Activated B cell treated with CpG ODN at 0.5 μM for 24 hours (primary cell): ENCODE measurements at regions of chr5 and their contacts with region 1.

Region 1: DNA sequence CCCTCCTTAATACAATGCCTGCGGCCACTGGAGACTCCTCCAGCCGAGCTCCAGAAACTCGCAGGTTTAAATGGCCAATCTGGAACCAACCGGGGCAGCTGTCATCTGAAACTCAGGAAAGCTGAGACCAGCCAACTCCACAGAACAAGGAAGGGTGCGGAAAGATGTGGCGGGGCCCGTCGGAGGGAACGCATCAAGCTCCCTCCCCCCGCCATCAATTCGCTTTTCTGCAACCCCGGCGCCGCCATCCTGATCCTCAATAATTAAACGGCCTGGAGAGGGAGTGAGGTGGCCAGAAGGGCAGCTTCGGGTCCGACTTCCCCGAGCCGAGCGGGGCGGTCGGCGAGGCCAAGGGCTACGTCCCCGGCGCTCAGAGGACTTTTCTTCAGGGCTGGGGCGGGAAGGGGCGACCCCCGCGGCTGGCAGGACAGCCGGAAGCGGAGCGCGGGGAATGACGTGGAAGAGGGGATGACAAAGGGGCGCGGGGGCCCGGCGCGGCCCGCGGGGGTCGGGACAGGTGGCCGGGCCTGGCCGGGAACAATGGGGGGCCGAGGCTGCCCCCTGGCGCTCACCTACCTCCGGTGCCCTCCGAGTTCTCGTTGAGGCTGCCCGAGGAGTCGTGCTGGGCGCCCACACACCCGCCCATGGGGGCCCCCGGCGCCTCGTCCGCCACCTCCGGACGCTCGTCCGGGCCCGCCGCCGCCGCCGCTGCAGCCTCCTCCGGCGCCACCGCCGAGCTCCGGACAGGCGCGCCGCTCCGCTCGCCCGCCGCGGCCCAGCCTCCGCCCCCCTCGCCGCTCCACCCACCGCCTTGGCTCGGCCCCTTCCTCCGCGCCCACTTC is at the start of gene UBTD2:
- DNase-seq: peak; percentile 90
- ATAC-seq: peak; percentile 88
- H3K4me3 Mint-ChIP-seq: peak within 1 kb of the TSS; percentile 90
- H3K27ac Mint-ChIP-seq: peak within 1 kb of the TSS; percentile 68
- H3K4me1 Mint-ChIP-seq: peaks cover 23% of the 10 kb centered on the region
- H3K27me3 Mint-ChIP-seq: no peaks in the 10 kb centered on the region
- CTCF ChIP-seq: peak; percentile 50
- total RNA-seq, gene UBTD2: 8.5 and 9.0 TPM in 2 replicates

Region 2: GRCh38 chr5:172106511-172107356 is 176.5 kb before region 1 on chr5:
- CTCF ChIA-PET with region 1: interaction called, 9 read pairs
- POLR2A ChIA-PET with region 1: interaction called, 9 read pairs
- intact Hi-C with region 1: loop called (anchors 1 kb)
- DNase-seq: peak; percentile 71
- ATAC-seq: no peak
- H3K4me3 Mint-ChIP-seq: no peak overlapping the region
- H3K27ac Mint-ChIP-seq: peak overlapping the region; percentile 68
- H3K4me1 Mint-ChIP-seq: peaks cover 41% of the 10 kb centered on the region
- H3K27me3 Mint-ChIP-seq: no peaks in the 10 kb centered on the region
- CTCF ChIP-seq: peak; percentile 34

Region 3: DNA sequence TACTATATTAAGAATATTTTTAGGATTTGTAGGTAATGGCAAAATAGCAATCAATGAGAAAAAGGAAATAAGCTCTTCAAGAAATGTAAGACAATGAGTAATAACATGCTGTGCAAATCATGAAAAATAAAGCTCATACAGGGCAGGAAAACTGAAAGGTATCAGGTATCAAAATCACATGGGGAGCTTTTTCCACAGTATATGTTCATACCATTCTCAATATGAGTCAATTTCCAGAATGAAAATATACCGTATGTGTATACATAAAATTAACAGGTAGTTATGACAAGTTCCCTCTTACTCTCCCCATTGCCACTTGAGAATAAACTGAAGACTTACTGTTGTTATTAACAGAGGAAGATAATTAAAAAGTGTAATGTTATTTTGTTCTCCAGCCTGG is 53.3 kb before region 1 on chr5:
- CTCF ChIA-PET with region 1: no interaction called
- POLR2A ChIA-PET with region 1: no interaction called
- intact Hi-C with region 1: loop called (anchors 5 kb)
- DNase-seq: no peak
- ATAC-seq: no peak
- H3K4me3 Mint-ChIP-seq: no peak overlapping the region
- H3K27ac Mint-ChIP-seq: no peak overlapping the region
- H3K4me1 Mint-ChIP-seq: peaks cover 2% of the 10 kb centered on the region
- H3K27me3 Mint-ChIP-seq: no peaks in the 10 kb centered on the region
- CTCF ChIP-seq: no peak

Region 4: DNA sequence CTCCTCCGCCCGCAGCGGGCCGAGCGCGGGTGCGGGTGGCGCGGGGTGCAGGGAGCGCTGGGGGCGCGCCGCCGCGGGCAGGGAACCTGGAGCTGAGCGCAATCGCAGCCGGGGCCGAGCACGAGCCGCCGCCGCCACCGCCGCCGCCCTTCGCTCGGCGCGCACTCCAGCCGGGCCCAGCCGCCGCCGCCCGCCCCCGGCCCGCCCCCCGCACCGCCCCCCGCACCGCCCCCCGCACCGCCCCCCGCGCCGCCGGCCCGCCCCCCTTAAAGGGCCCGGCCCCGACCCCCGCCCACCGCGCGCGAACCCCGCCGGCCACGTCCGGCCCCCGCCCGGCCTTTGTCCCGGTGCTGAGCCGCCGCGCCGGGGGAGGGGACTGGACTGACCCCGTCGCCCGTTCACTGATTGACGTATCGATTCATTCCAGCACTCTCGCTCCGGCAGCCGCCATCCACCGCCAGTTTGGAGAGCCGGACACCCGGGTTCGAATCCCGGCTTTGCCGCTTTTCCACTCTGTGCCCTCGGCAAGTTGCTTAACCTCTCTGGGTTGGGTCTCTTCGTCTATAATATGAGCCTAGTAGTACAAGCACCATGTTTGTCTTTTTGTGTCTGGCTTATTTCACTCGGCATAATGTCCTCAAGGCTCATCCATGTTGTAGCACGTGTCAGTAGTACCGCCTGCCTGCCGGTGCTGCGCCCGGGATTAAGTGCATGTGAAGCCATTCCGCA is 171.3 kb after region 1 on chr5 and contains the start of gene SH3PXD2B:
- CTCF ChIA-PET with region 1: no interaction called
- POLR2A ChIA-PET with region 1: no interaction called
- intact Hi-C with region 1: loop called (anchors 5 kb)
- DNase-seq: peak; percentile 36
- ATAC-seq: peak; percentile 80
- H3K4me3 Mint-ChIP-seq: peak within 1 kb of the TSS; percentile 78
- H3K27ac Mint-ChIP-seq: no peak within 1 kb of the TSS
- H3K4me1 Mint-ChIP-seq: peaks cover 13% of the 10 kb centered on the region
- H3K27me3 Mint-ChIP-seq: peaks cover 55% of the 10 kb centered on the region
- CTCF ChIP-seq: no peak
- total RNA-seq, gene SH3PXD2B: 0.02 TPM in 1 of 2 replicates, not detected in the other

Region 5: GRCh38 chr5:172777881-172778814 is 494.9 kb after region 1 on chr5:
- CTCF ChIA-PET with region 1: no interaction called
- POLR2A ChIA-PET with region 1: interaction called, 11 read pairs
- intact Hi-C with region 1: no loop called
- DNase-seq: no peak
- ATAC-seq: peak; percentile 6
- H3K4me3 Mint-ChIP-seq: peak overlapping the region; percentile 63
- H3K27ac Mint-ChIP-seq: peak overlapping the region; percentile 97
- H3K4me1 Mint-ChIP-seq: peaks cover 39% of the 10 kb centered on the region
- H3K27me3 Mint-ChIP-seq: no peaks in the 10 kb centered on the region
- CTCF ChIP-seq: no peak

Region 6: GRCh38 chr5:172958331-172959046 is 675.2 kb after region 1 on chr5:
- CTCF ChIA-PET with region 1: no interaction called
- POLR2A ChIA-PET with region 1: no interaction called
- intact Hi-C with region 1: loop called (anchors 5 kb)
- DNase-seq: peak; percentile 64
- ATAC-seq: peak; percentile 76
- H3K4me3 Mint-ChIP-seq: peak overlapping the region; percentile 97
- H3K27ac Mint-ChIP-seq: peak overlapping the region; percentile 94
- H3K4me1 Mint-ChIP-seq: peaks cover 31% of the 10 kb centered on the region
- H3K27me3 Mint-ChIP-seq: no peaks in the 10 kb centered on the region
- CTCF ChIP-seq: no peak